Natural killer cell (primary cell): ENCODE measurements at regions of chr3 and their contacts with region 1.

Region 1: DNA sequence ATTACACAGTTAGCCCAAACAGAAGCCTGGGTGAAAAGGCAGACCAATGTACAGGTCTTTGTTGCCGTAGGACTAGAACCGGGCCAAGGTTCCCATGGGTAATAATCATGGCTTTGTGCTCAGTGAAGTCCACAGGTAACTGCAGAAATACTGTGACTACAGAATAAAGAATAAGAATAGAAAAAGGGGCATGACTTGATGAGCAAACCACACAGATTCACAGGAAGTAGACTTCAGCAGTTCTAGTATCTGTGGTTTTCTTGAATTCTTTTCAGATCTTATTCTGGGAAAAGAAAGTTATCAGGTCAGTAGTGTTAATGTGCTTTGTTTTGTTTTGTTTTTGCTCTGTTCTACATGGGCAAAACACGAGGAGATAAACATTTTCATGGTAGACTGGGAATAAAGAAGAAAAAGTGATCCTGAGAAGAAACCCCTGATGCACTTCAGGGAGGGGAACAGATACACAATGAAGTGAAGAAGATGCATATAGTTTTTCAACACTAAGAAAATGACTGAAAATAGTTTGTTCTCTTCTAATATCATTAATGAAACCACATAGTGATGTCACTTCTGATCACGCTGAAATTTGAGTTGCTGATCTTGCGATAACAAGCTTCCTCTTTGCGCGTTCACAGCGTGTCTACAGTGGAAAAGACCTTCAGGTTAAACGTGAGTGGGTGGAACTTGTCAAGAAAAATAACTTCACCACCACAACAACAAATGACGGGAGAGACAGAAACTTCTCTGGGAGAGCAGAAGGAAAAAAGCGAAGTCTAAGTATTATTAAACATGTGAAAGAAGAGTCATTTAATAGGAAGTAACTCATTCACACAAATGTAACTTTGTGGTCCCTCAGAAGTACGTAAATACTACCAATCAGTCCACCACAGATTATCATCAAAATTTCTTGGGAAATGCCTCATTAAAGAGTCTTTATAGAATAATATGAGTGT is 315.8 kb upstream of the SATB1 start:
- DNase-seq: peak in 1 of 2 donors; percentile 90
- ATAC-seq: peak; percentile 49 to 80 (median 68)
- H3K4me3 ChIP-seq: peak overlapping the region; percentile 7
- H3K4me3 Mint-ChIP-seq: peak overlapping the region; percentile 88
- H3K27ac ChIP-seq: peak overlapping the region; percentile 75
- H3K27ac Mint-ChIP-seq: peak overlapping the region; percentile 94 to 97
- H3K4me1 ChIP-seq: peaks cover 38% of the 10 kb centered on the region
- H3K4me1 Mint-ChIP-seq: peaks cover 88 to 90% of the 10 kb centered on the region in 2 donors
- H3K27me3 ChIP-seq: no peaks in the 10 kb centered on the region
- H3K27me3 Mint-ChIP-seq: no peaks in the 10 kb centered on the region
- CTCF ChIP-seq: no peak

Region 2: DNA sequence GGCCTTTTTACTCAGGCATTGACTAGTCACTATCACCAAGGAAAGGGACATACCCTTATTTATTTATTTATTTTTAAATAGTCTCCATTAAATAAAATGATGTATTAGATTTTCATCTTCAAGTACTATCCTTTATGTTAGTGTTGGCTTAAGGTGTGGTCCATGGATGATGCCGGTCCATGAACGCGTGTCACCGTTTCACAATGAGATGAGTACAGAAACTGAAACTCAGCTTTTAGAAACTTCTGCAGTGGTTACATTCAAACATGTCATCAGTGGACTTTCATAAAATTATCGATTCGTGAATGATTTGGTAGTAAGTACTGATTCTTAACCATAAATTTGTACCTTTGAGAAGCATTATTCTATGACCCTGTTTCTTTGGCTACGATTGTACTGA is 482.4 kb before region 1 on chr3:
- intact Hi-C with region 1: no loop called
- DNase-seq: no peak
- ATAC-seq: no peak
- H3K4me3 ChIP-seq: no peak overlapping the region
- H3K4me3 Mint-ChIP-seq: no peak overlapping the region
- H3K27ac ChIP-seq: no peak overlapping the region
- H3K27ac Mint-ChIP-seq: no peak overlapping the region
- H3K4me1 ChIP-seq: no peaks in the 10 kb centered on the region
- H3K4me1 Mint-ChIP-seq: no peaks in the 10 kb centered on the region
- H3K27me3 ChIP-seq: no peaks in the 10 kb centered on the region
- H3K27me3 Mint-ChIP-seq: peaks cover 0 to 3% of the 10 kb centered on the region in 2 donors
- CTCF ChIP-seq: no peak

Region 3: DNA sequence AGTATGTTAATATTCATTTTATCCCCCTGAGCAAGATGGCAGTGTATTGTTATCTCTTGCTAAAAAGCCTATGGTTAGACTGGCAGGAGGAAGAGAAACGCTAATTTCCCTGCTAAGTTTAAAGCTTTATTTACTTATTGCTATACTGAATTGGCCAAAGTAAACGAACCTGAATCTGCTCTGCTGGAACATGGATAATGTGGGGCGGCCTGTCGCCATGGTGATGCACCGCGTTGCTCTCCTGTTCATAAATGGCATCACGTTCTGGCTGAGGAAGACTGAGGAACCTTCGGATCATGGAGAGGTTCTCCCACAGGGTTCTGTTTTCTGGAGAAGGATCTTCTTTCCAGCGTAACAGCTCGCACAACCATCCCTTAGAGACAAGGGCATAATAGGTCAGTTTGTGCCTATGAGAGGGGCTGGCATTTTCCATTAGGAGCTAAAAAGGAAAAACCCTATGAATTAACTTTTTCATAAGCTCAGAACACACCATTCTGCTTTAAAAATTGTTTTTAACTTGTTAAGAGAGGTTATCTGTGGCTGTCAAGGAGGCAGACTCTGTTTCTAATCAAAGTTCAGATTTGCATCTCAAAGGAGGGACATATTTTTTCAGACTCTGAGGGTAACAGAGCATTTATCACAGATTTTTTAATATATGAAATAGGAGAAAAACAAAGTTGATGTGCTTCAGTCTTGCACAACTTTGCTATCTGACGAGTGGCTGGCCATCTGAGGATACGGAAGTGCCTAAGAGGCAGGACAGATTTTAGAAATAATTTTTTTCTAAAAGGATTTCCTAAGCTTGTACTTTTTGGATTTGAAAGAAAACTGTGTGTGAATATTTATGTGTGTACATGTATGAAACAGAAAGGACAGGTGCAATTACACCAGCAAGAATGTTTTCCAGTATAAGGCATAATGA is 388.8 kb before region 1 on chr3:
- intact Hi-C with region 1: loop called (anchors 10 kb)
- DNase-seq: no peak
- ATAC-seq: no peak
- H3K4me3 ChIP-seq: no peak overlapping the region
- H3K4me3 Mint-ChIP-seq: no peak overlapping the region
- H3K27ac ChIP-seq: no peak overlapping the region
- H3K27ac Mint-ChIP-seq: peak overlapping the region; percentile 23 to 66
- H3K4me1 ChIP-seq: no peaks in the 10 kb centered on the region
- H3K4me1 Mint-ChIP-seq: peaks cover 14 to 16% of the 10 kb centered on the region in 2 donors
- H3K27me3 ChIP-seq: no peaks in the 10 kb centered on the region
- H3K27me3 Mint-ChIP-seq: no peaks in the 10 kb centered on the region
- CTCF ChIP-seq: no peak

Region 4: GRCh38 chr3:18444595-18445400 is 296.1 kb before region 1 on chr3:
- intact Hi-C with region 1: loop called (anchors 5 kb)
- DNase-seq: peak; percentile 76 to 88
- ATAC-seq: peak; percentile 78 to 88 (median 84)
- H3K4me3 ChIP-seq: peak overlapping the region; percentile 80
- H3K4me3 Mint-ChIP-seq: peak overlapping the region; percentile 98
- H3K27ac ChIP-seq: peak overlapping the region; percentile 76
- H3K27ac Mint-ChIP-seq: peak overlapping the region; percentile 88 to 97
- H3K4me1 ChIP-seq: peaks cover 23% of the 10 kb centered on the region
- H3K4me1 Mint-ChIP-seq: peaks cover 58 to 69% of the 10 kb centered on the region in 2 donors
- H3K27me3 ChIP-seq: no peaks in the 10 kb centered on the region
- H3K27me3 Mint-ChIP-seq: no peaks in the 10 kb centered on the region
- CTCF ChIP-seq: no peak

Region 5: DNA sequence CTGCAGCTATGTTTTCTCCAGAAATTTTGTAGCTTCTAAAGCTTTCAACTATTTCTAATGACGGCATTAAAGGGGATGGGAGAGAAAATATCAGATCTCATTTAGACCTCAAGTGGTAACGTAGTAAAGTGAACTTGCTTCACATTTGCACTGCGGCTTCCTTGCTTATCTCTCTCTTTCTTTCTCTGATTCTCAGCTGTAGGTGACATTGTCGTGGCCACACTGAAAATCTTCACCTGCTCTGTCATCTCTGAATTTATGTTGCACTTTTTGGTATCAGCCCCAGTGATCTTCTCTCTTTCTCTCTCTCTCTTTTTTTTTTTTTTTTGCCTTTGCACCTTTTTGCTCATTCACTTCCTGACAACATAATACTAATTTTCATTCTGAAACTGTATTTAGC is 61.7 kb before region 1 on chr3:
- intact Hi-C with region 1: loop called (anchors 1 kb)
- DNase-seq: peak; percentile 18 to 74
- ATAC-seq: peak; percentile 85 to 91 (median 91)
- H3K4me3 ChIP-seq: no peak overlapping the region
- H3K4me3 Mint-ChIP-seq: peak overlapping the region; percentile 60
- H3K27ac ChIP-seq: peak overlapping the region; percentile 70
- H3K27ac Mint-ChIP-seq: peak overlapping the region; percentile 71 to 80
- H3K4me1 ChIP-seq: peaks cover 12% of the 10 kb centered on the region
- H3K4me1 Mint-ChIP-seq: peaks cover 61 to 65% of the 10 kb centered on the region in 2 donors
- H3K27me3 ChIP-seq: no peaks in the 10 kb centered on the region
- H3K27me3 Mint-ChIP-seq: no peaks in the 10 kb centered on the region
- CTCF ChIP-seq: no peak

Region 6: GRCh38 chr3:18758047-18758704 is 17.3 kb after region 1 on chr3:
- intact Hi-C with region 1: loop called (anchors 1 kb)
- DNase-seq: peak in 1 of 2 donors; percentile 92
- ATAC-seq: peak; percentile 90 to 99 (median 97)
- H3K4me3 ChIP-seq: no peak overlapping the region
- H3K4me3 Mint-ChIP-seq: no peak overlapping the region
- H3K27ac ChIP-seq: no peak overlapping the region
- H3K27ac Mint-ChIP-seq: peak overlapping the region; percentile 17 to 27
- H3K4me1 ChIP-seq: no peaks in the 10 kb centered on the region
- H3K4me1 Mint-ChIP-seq: peaks cover 13 to 19% of the 10 kb centered on the region in 2 donors
- H3K27me3 ChIP-seq: no peaks in the 10 kb centered on the region
- H3K27me3 Mint-ChIP-seq: no peaks in the 10 kb centered on the region
- CTCF ChIP-seq: peak; percentile 90

Region 7: DNA sequence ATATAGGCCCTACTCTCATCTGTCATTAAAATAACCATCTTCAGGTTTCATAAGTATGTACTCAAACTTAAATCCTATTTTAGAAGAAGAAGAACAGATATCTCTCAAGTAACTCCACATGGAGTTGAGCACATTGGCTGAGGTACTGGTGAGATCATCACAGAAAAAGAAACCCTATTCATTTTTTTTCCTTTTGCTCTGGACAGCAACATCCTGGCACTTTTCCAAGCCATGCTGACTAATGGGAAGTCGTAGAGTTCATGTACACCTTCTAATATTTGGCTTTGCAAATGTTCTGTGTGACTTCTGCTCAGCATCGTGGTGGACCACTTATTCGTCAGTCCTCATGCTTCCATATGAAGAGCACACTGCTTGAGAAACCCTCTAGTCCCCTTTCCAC is 71.4 kb after region 1 on chr3:
- intact Hi-C with region 1: no loop called
- DNase-seq: no peak
- ATAC-seq: no peak
- H3K4me3 ChIP-seq: no peak overlapping the region
- H3K4me3 Mint-ChIP-seq: no peak overlapping the region
- H3K27ac ChIP-seq: no peak overlapping the region
- H3K27ac Mint-ChIP-seq: no peak overlapping the region
- H3K4me1 ChIP-seq: no peaks in the 10 kb centered on the region
- H3K4me1 Mint-ChIP-seq: no peaks in the 10 kb centered on the region
- H3K27me3 ChIP-seq: no peaks in the 10 kb centered on the region
- H3K27me3 Mint-ChIP-seq: peaks cover 0 to 2% of the 10 kb centered on the region in 2 donors
- CTCF ChIP-seq: no peak